ENCODE measurements at regions of chr7 and their contacts with region 1.

Region 1: DNA sequence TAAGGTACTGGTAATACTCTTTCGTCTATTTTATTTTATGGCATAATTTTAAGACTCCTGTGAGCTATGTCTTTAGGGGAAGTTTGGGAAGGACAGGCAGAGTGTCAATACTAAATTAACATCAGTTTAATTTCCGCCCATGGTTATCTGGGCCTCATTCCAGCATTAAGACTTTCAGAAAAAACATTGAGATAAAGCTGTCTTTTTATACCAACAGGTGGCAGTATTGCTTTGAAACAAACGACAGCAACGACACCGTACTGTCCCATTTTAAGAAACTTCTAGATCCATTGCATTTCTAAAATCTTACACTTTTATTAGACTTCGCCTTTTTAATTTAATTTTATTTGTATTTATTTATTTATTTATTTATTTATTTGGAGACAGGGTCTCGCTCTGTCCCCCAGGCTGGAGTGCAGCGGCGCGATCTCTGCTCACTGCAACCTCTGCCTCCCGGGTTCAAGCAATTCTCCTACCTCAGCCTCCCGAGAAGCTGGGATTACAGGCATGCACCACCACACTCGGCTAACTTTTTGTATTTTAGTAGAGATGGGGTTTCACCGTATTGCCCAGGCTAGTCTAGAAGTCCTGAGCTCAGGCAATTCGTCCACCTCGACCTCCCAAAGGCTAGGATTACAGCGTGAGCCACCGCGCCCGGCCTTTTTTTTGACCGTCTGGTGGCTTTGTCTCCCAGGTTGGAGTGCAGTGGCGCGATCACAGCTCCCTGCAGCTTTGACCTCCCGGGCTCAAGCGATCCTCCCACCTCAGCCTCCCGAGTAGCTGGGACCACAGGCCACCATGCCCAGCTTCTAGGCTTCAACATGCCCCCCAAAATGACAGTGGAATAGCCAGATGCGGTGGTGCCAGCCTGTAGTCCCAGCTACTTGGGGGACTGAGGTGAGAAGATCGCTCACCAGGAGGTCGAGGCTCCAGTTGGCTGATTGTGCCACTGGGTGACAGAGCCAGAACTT is 78.7 kb upstream of the C1GALT1 start:
- DNase-seq: peak in 2 of 7 donors; percentile 22 to 25
- H3K4me3 ChIP-seq: no peak overlapping the region
- H3K27ac ChIP-seq: no peak overlapping the region
- H3K4me1 ChIP-seq: peaks cover 4 to 18% of the 10 kb centered on the region in 2 donors
- H3K27me3 ChIP-seq: no peaks in the 10 kb centered on the region
- CTCF ChIP-seq: peak; percentile 58 to 76 (median 70)
- POLR2A ChIP-seq: no peak

Region 2: DNA sequence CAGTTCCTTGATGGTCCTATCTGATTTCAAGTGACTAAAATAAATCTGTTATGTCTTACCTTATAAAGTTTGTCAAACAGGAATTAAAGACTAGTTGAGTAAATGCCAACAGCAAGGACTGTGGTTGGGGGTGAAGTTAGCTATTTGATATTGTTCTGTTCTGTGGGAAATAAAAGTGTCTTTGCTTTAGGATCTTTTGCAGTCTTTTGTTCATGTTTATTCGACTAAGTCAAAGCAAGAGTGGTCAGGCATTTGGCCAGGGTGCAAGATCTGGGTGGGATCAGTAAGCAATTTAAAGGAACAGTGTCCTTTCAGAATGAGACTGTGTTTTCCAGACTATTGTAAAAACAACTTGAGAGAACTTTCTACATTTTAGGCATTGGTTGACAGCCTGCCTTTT is 432.1 kb after region 1 on chr7 and contains the start of gene COL28A1:
- intact Hi-C with region 1: loop called in 1 of 2 experiments (anchors 10 kb)
- DNase-seq: no peak
- H3K4me3 ChIP-seq: no peak within 1 kb of the TSS
- H3K27ac ChIP-seq: no peak within 1 kb of the TSS
- H3K4me1 ChIP-seq: no peaks in the 10 kb centered on the region
- H3K27me3 ChIP-seq: no peaks in the 10 kb centered on the region
- CTCF ChIP-seq: no peak
- POLR2A ChIP-seq: no peak
- total RNA-seq, gene COL28A1: 0.66 to 6.2 (median 1.9) TPM

Measured in adrenal gland (tissue), 19 donors.